Mammary epithelial cell (primary cell): ENCODE measurements at regions of chr3 and their contacts with region 1.

Region 1: DNA sequence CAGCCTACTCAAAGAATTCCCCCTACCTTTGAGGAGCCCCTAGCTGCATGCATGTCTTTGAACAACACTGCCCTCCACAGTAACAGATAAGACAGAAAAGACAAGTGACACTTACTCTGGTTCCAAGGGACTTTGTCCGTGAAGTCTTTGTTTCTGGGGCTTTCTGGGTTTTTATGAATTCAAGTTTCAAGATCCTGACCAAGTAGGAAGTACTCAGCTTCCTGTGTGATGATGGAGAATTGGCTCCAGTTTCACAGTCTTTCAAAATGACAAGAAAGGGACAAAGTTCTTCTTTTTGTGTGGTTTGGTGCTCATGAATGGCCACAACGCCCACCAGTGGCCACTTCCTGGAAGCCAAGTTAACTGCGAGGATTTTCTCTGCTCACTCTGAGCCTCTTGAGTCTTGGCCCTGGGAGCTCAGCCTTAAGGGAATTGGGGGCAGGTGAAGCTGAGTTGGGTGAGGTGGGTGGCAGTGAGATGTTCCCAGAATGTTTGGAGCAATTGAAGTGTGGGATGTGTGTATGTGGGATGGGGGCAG is at the start of gene CCR1:
- DNase-seq: peak; percentile 46
- H3K4me3 ChIP-seq: no peak within 1 kb of the TSS
- H3K27ac ChIP-seq: no peak within 1 kb of the TSS
- H3K4me1 ChIP-seq: peaks cover 11% of the 10 kb centered on the region
- H3K27me3 ChIP-seq: no peaks in the 10 kb centered on the region
- CTCF ChIP-seq: peak; percentile 73 to 86
- total RNA-seq, gene CCR1: not detected

Region 2: DNA sequence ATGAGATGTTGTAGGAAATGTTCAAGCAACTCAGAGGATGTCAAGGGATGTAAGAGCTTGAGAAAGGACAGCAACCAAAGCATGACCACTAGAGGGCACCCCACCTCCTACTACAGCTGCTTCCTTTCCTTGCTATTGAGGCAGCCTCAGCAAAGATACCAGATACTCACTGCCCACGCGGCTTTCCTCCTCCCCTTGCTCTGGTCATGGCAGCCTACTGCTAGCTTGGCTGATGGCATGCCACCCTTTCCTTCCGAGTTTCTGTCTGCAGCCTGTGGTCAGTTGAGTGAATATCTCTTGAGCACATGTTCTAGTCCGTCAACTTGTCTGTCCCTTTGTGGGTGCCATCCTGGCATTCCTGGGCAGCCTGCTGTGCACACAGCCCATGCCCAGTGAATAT is 269.4 kb before region 1 on chr3:
- CTCF ChIA-PET with region 1: no interaction called
- dilution Hi-C with region 1: no loop called
- in situ Hi-C with region 1: loop called (anchors 10 to 25 kb)
- intact Hi-C with region 1: loop called (anchors 2 kb)
- DNase-seq: peak; percentile 74
- H3K4me3 ChIP-seq: no peak overlapping the region
- H3K27ac ChIP-seq: no peak overlapping the region
- H3K4me1 ChIP-seq: no peaks in the 10 kb centered on the region
- H3K27me3 ChIP-seq: no peaks in the 10 kb centered on the region
- CTCF ChIP-seq: peak; percentile 93 to 95

Region 3: GRCh38 chr3:46089237-46090011 is 118.8 kb before region 1 on chr3:
- CTCF ChIA-PET with region 1: no interaction called
- dilution Hi-C with region 1: no loop called
- in situ Hi-C with region 1: loop called in 1 of 2 experiments (anchors 10 kb)
- intact Hi-C with region 1: loop called (anchors 1 kb)
- DNase-seq: peak; percentile 97
- H3K4me3 ChIP-seq: no peak overlapping the region
- H3K27ac ChIP-seq: peak overlapping the region; percentile 70
- H3K4me1 ChIP-seq: peaks cover 27% of the 10 kb centered on the region
- H3K27me3 ChIP-seq: no peaks in the 10 kb centered on the region
- CTCF ChIP-seq: no peak

Region 4: DNA sequence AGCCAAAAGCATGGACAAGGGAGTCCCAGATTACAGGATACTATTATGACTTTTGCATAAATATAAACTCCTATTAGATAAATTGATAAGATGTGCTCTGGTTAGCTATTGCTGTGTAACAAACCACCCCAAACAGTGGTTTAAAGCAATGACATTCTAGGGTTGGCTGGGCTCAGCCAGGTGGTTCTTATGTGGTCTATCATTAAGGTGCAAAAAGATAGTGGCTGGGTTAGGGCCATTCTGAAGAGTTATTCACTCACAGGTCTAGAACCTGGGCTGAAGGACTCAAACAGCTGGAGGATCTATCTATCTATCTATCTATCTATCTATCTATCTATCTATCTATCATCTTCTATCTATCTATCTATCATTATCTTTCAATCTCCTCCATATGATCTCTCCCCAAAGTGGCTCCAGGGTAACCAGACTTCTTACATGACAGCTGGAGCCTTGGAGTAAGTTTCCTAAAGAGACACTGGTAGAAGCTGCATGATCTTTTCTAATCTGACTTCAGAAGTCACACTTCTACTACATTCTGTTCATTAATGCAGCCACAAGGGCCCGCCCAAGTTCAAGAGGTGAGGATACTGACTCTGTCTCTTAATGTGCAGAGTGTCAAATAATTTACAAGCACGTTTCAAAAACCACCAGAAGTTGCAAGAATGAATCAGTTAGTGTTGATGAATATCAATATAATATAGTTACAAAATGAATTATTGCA is 106.0 kb before region 1 on chr3:
- CTCF ChIA-PET with region 1: no interaction called
- dilution Hi-C with region 1: no loop called
- in situ Hi-C with region 1: no loop called
- intact Hi-C with region 1: loop called (anchors 1 kb)
- DNase-seq: peak; percentile 29
- H3K4me3 ChIP-seq: no peak overlapping the region
- H3K27ac ChIP-seq: no peak overlapping the region
- H3K4me1 ChIP-seq: peaks cover 16% of the 10 kb centered on the region
- H3K27me3 ChIP-seq: no peaks in the 10 kb centered on the region
- CTCF ChIP-seq: peak; percentile 16 to 37

Region 5: GRCh38 chr3:46312991-46313390 is 104.8 kb after region 1 on chr3:
- CTCF ChIA-PET with region 1: no interaction called
- dilution Hi-C with region 1: loop called (anchors 5 kb)
- in situ Hi-C with region 1: no loop called
- intact Hi-C with region 1: no loop called
- DNase-seq: peak; percentile 75
- H3K4me3 ChIP-seq: no peak overlapping the region
- H3K27ac ChIP-seq: no peak overlapping the region
- H3K4me1 ChIP-seq: no peaks in the 10 kb centered on the region
- H3K27me3 ChIP-seq: no peaks in the 10 kb centered on the region
- CTCF ChIP-seq: no peak